Mucosa of descending colon (tissue), 3 donors: ENCODE measurements at regions of chr11 and their contacts with region 1.

Region 1: GRCh38 chr11:94519478-94520084 is 7.3 kb downstream of the C11orf97 start:
- DNase-seq: peak in 1 of 3 donors; percentile 58
- ATAC-seq: peak; percentile 54
- H3K4me3 ChIP-seq: no peak overlapping the region
- H3K4me1 ChIP-seq: no peaks in the 10 kb centered on the region
- CTCF ChIP-seq: peak; percentile 14

Region 2: DNA sequence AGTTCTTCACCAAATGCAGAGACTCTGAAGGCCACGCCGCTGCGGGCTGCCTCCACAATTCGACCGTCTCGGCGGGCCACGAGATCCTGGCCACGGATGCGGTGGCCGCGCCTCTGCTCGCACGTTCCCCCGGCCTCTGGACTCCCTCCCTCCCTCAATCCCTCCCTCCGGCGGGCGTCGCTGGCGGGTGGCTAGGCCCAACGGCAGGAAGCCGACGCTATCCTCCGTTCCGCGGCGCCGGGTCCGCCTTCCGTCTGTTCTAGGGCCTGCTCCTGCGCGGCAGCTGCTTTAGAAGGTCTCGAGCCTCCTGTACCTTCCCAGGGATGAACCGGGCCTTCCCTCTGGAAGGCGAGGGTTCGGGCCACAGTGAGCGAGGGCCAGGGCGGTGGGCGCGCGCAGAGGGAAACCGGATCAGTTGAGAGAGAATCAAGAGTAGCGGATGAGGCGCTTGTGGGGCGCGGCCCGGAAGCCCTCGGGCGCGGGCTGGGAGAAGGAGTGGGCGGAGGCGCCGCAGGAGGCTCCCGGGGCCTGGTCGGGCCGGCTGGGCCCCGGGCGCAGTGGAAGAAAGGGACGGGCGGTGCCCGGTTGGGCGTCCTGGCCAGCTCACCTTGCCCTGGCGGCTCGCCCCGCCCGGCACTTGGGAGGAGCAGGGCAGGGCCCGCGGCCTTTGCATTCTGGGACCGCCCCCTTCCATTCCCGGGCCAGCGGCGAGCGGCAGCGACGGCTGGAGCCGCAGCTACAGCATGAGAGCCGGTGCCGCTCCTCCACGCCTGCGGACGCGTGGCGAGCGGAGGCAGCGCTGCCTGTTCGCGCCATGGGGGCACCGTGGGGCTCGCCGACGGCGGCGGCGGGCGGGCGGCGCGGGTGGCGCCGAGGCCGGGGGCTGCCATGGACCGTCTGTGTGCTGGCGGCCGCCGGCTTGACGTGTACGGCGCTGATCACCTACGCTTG is 24.4 kb after region 1 on chr11 and contains the start of gene FUT4:
- intact Hi-C with region 1: no loop called
- DNase-seq: peak; percentile 93 to 96 (median 95)
- ATAC-seq: peak; percentile 88
- H3K4me3 ChIP-seq: peak within 1 kb of the TSS; percentile 69
- H3K4me1 ChIP-seq: peaks cover 42% of the 10 kb centered on the region
- CTCF ChIP-seq: no peak
- total RNA-seq, gene FUT4: 13.9 to 23.5 (median 21.9) TPM

Region 3: DNA sequence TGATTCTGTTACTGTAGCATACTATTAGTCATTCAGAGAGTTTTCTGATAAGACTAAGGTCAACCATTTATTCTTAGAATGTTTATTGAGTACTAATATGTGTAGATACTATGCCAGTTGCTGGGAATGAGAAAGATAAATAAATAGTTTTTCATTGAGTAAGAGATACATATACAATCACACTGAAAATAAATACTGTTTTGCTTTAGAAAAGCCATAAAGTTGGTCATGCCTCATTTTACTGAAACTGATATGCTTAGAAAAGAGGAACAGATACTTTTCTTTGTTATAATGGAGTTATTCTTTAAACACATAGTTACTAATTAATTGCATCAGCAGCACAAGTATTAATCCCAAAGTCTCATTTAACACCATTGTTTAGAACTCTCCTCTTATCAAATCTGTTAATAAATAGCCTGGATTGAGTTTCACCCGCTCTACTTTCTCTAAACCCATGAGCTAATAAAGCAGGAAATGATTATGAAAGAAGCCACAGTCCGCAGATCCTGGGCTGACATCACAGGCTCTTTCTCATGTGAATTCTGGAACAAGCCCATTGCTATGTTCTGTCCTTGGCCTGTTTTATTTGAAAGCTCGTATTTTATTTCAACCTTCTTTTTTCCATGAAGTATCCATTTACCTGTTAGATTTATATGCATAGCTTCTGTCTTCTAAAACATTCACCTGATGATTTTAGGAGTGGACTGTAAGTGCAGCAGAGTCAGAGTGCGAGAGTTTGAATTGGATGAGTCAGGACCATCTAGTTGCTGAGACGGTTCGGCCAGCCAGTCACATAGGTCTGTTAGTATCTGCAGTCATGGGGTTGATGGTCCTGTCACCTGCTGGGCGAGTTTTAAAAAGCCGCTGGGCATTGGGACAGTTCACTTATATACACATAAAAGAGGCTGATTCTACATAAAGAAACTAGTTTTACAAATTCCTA is 83.1 kb after region 1 on chr11:
- intact Hi-C with region 1: loop called in 1 of 2 experiments (anchors 5 kb)
- DNase-seq: peak; percentile 65 to 88 (median 70)
- ATAC-seq: peak; percentile 94
- H3K4me3 ChIP-seq: no peak overlapping the region
- H3K4me1 ChIP-seq: no peaks in the 10 kb centered on the region
- CTCF ChIP-seq: no peak

Region 4: GRCh38 chr11:94897330-94897768 is 377.8 kb after region 1 on chr11:
- intact Hi-C with region 1: loop called in 1 of 2 experiments (anchors 10 kb)
- DNase-seq: peak in 1 of 3 donors; percentile 65
- ATAC-seq: peak; percentile 61
- H3K4me3 ChIP-seq: no peak overlapping the region
- H3K4me1 ChIP-seq: no peaks in the 10 kb centered on the region
- CTCF ChIP-seq: peak; percentile 64